ENCODE measurements at regions of chr11 and their contacts with region 1.

Region 1: GRCh38 chr11:74492974-74493790 is at the start of gene LIPT2:
- DNase-seq: peak; percentile 100
- H3K4me3 ChIP-seq: peak within 1 kb of the TSS; percentile 88
- H3K4me3 Mint-ChIP-seq: peak within 1 kb of the TSS; percentile 76
- H3K27ac Mint-ChIP-seq: peak within 1 kb of the TSS; percentile 82
- H3K4me1 ChIP-seq: peaks cover 7% of the 10 kb centered on the region
- H3K4me1 Mint-ChIP-seq: peaks cover 10% of the 10 kb centered on the region
- H3K27me3 ChIP-seq: no peaks in the 10 kb centered on the region
- H3K27me3 Mint-ChIP-seq: no peaks in the 10 kb centered on the region
- CTCF ChIP-seq: no peak
- total RNA-seq, gene LIPT2: 10.5 and 14.4 TPM in 2 replicates

Region 2: GRCh38 chr11:74147199-74147929 is 345.8 kb before region 1 on chr11:
- CTCF ChIA-PET with region 1: no interaction called
- POLR2A ChIA-PET with region 1: no interaction called
- intact Hi-C with region 1: no loop called
- DNase-seq: no peak
- H3K4me3 ChIP-seq: no peak overlapping the region
- H3K4me3 Mint-ChIP-seq: no peak overlapping the region
- H3K27ac Mint-ChIP-seq: no peak overlapping the region
- H3K4me1 ChIP-seq: peaks cover 14% of the 10 kb centered on the region
- H3K4me1 Mint-ChIP-seq: peaks cover 20% of the 10 kb centered on the region
- H3K27me3 ChIP-seq: no peaks in the 10 kb centered on the region
- H3K27me3 Mint-ChIP-seq: no peaks in the 10 kb centered on the region
- CTCF ChIP-seq: no peak

Region 3: DNA sequence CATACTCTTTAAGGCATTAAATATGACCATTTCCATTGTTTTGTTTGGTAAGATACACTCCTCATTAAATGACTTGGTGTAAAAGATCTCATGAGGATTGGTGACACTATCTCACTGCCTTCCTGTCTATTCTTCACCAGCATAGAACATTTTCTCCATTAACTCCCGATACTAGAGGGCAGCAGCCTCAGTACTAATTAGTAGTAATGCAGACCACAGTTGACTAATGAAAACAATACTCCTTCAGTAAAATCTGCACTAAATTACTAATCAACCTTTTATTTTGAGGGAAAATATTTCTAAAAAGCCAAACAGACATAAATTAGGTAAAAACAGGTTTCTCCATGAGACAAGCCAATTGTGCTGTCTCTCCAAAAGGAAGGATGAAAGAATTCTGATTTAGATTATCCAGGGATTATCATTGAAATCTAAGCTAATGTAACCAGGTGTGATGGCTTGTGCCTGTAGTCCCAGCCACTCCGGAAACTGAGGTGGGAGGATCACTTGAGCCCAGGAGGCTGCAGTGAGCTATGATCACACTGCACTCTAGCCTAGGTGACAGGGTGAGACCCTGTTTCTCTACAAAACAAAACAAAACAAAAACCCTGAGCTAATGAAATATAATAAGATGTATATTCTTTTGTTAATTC is 104.4 kb before region 1 on chr11:
- CTCF ChIA-PET with region 1: no interaction called
- POLR2A ChIA-PET with region 1: interaction called, 11 read pairs
- intact Hi-C with region 1: no loop called
- DNase-seq: peak; percentile 57 to 80
- H3K4me3 ChIP-seq: no peak overlapping the region
- H3K4me3 Mint-ChIP-seq: no peak overlapping the region
- H3K27ac Mint-ChIP-seq: no peak overlapping the region
- H3K4me1 ChIP-seq: no peaks in the 10 kb centered on the region
- H3K4me1 Mint-ChIP-seq: no peaks in the 10 kb centered on the region
- H3K27me3 ChIP-seq: no peaks in the 10 kb centered on the region
- H3K27me3 Mint-ChIP-seq: peaks cover 7% of the 10 kb centered on the region
- CTCF ChIP-seq: peak; percentile 88 to 91

Region 4: DNA sequence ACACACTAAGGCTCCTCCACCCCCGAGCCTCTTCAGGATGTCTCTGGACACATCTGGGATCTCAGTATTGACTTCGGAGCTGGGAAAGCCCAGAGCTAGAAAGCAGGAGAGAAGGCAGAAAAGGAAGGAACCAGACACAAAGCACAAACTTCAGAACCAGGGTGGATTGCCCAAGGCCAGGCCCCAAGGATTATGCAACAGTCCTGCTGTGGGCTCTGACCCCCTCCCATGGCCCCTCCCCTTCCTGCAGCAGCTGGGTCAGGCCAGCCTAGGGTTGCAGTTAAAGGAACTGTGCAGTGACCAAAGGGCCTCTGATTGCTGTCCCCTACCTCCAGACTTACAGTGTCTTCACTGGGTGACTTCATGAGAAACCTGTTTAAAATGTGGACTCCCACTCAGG is 31.2 kb before region 1 on chr11:
- CTCF ChIA-PET with region 1: interaction called, 15 read pairs
- POLR2A ChIA-PET with region 1: interaction called, 23 read pairs
- intact Hi-C with region 1: loop called (anchors 1 kb)
- DNase-seq: peak; percentile 88 to 91
- H3K4me3 ChIP-seq: peak overlapping the region; percentile 19
- H3K4me3 Mint-ChIP-seq: peak overlapping the region; percentile 49
- H3K27ac Mint-ChIP-seq: peak overlapping the region; percentile 91
- H3K4me1 ChIP-seq: peaks cover 57% of the 10 kb centered on the region
- H3K4me1 Mint-ChIP-seq: peaks cover 26% of the 10 kb centered on the region
- H3K27me3 ChIP-seq: no peaks in the 10 kb centered on the region
- H3K27me3 Mint-ChIP-seq: no peaks in the 10 kb centered on the region
- CTCF ChIP-seq: no peak

Region 5: GRCh38 chr11:74476536-74476935 is 16.6 kb before region 1 on chr11:
- CTCF ChIA-PET with region 1: no interaction called
- POLR2A ChIA-PET with region 1: interaction called, 19 read pairs
- intact Hi-C with region 1: no loop called
- DNase-seq: no peak
- H3K4me3 ChIP-seq: no peak overlapping the region
- H3K4me3 Mint-ChIP-seq: no peak overlapping the region
- H3K27ac Mint-ChIP-seq: no peak overlapping the region
- H3K4me1 ChIP-seq: no peaks in the 10 kb centered on the region
- H3K4me1 Mint-ChIP-seq: no peaks in the 10 kb centered on the region
- H3K27me3 ChIP-seq: no peaks in the 10 kb centered on the region
- H3K27me3 Mint-ChIP-seq: no peaks in the 10 kb centered on the region
- CTCF ChIP-seq: no peak

Region 6: GRCh38 chr11:74592441-74593362 is 99.5 kb after region 1 on chr11 and contains the start of gene POLD3:
- CTCF ChIA-PET with region 1: no interaction called
- POLR2A ChIA-PET with region 1: interaction called, 15 read pairs
- intact Hi-C with region 1: loop called (anchors 1 kb)
- DNase-seq: peak; percentile 98 to 99
- H3K4me3 ChIP-seq: peak within 1 kb of the TSS; percentile 57
- H3K4me3 Mint-ChIP-seq: peak within 1 kb of the TSS; percentile 84
- H3K27ac Mint-ChIP-seq: peak within 1 kb of the TSS; percentile 92
- H3K4me1 ChIP-seq: peaks cover 18% of the 10 kb centered on the region
- H3K4me1 Mint-ChIP-seq: peaks cover 19% of the 10 kb centered on the region
- H3K27me3 ChIP-seq: no peaks in the 10 kb centered on the region
- H3K27me3 Mint-ChIP-seq: no peaks in the 10 kb centered on the region
- CTCF ChIP-seq: no peak
- total RNA-seq, gene POLD3: 45.8 and 49.7 TPM in 2 replicates